Gastrocnemius medialis (tissue), 4 donors: ENCODE measurements at regions of chr5 and their contacts with region 1.

Region 1: DNA sequence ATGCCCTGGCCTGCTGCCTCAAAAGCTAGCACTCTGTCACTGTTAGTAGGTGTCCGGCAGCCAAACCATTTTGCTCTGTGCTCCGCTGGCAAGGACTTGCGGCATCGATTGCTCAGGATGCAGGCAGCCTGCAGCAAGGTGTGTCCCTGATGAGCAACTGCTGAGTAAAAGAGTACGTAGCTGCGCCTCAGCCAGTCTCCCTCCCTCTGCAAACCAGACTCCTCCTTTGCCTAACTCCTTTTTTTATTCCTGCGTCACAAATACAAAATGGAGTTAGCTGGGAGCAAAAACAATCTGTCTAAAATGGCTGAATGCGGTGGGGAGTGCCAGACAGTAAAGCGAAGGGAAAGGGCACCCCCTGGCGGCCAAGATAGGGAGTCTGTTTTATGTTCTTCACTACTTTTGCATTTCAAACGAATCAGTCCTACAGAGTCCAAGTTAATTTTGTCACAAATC is 61.1 kb downstream of the DIAPH1 start:
- DNase-seq: peak; percentile 80 to 93
- ATAC-seq: peak; percentile 72 to 79
- H3K4me3 ChIP-seq: peak overlapping the region; percentile 21 to 38 (median 30)
- H3K27ac ChIP-seq: peak overlapping the region; percentile 77 to 92 (median 88)
- H3K4me1 ChIP-seq: peaks cover 37 to 44% of the 10 kb centered on the region in 2 donors
- H3K27me3 ChIP-seq: no peaks in the 10 kb centered on the region
- CTCF ChIP-seq: peak; percentile 83 to 92 (median 91)
- POLR2A ChIP-seq: no peak

Region 2: GRCh38 chr5:141320225-141321169 is 237.2 kb before region 1 on chr5 and contains the start of gene TAF7:
- in situ Hi-C with region 1: loop called in 2 of 4 experiments (anchors 10 kb)
- intact Hi-C with region 1: loop called (anchors 2 kb)
- DNase-seq: peak; percentile 82 to 88
- ATAC-seq: peak; percentile 94 to 97
- H3K4me3 ChIP-seq: peak within 1 kb of the TSS; percentile 62 to 86 (median 84)
- H3K27ac ChIP-seq: peak within 1 kb of the TSS; percentile 85 to 97 (median 94)
- H3K4me1 ChIP-seq: peaks cover 32 to 35% of the 10 kb centered on the region in 2 donors
- H3K27me3 ChIP-seq: no peaks in the 10 kb centered on the region
- CTCF ChIP-seq: peak; percentile 79 to 95 (median 88)
- POLR2A ChIP-seq: peak; percentile 99 to 100
- total RNA-seq, gene TAF7: 60.9 to 91.2 (median 79.8) TPM

Region 3: DNA sequence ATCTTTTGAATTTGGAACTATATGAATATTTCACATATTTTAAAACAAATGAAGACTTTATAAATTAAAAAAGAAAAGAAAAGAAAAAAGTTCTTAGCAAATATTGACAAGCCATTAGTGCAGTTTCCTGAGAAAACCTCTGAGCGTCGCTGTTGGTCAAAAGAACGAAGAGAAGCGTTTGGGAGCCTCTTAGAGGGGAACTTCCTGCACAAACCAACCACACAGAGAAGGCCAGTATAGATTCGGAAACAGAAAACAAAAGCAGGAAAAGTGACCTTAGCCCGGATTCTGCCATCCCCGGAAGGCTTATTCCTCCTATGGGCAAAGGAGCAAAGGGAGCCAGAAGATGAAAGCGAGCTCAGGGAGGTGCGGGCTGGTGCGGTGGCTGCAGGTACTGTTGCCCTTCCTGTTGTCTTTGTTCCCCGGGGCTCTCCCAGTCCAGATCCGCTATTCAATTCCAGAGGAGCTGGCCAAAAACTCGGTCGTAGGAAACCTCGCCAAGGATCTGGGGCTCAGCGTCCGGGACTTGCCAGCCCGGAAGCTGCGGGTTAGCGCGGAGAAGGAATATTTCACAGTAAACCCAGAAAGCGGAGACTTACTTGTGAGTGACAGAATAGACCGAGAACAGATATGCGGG is 197.8 kb before region 1 on chr5 and contains the start of gene PCDHGB2:
- in situ Hi-C with region 1: no loop called
- intact Hi-C with region 1: loop called (anchors 1 kb)
- DNase-seq: no peak
- ATAC-seq: peak; percentile 30 to 71
- H3K4me3 ChIP-seq: peak within 1 kb of the TSS; percentile 41 to 57 (median 42)
- H3K27ac ChIP-seq: peak within 1 kb of the TSS; percentile 30 to 67 (median 52)
- H3K4me1 ChIP-seq: peaks cover 5 to 9% of the 10 kb centered on the region in 2 donors
- H3K27me3 ChIP-seq: peaks cover 0 to 39% (median 35%) of the 10 kb centered on the region in 3 donors
- CTCF ChIP-seq: peak; percentile 26 to 48 (median 34)
- POLR2A ChIP-seq: no peak
- total RNA-seq, gene PCDHGB2: 0.55 to 3.4 (median 1.9) TPM

Region 4: DNA sequence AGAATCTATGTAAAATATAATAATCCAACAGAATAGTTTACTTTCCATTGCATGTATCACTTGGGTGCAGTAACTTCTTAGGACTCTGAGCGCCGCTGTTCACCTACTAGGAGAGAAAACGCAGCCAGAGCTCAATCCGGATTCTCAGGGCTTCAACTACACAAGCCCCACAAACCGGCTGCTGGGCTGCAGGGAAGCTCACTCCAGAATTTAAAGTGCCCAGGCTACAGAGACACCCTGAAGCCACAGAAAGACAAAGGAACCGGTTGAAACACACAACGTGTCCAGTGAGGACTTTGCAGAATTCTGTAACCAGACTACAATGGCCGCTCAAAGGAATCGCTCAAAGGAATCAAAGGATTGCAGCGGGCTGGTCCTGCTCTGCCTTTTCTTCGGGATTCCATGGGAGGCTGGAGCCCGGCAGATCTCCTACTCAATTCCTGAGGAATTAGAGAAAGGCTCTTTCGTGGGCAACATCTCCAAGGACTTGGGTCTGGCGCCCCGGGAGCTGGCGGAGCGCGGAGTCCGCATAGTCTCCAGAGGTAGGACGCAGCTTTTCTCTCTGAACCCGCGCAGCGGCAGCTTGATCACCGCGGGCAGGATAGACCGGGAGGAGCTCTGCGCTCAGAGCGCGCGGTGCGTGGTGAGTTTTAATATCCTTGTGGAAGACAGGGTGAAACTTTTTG is 144.7 kb before region 1 on chr5 and contains the start of gene PCDHGA10:
- in situ Hi-C with region 1: loop called in 2 of 4 experiments (anchors 5 kb)
- intact Hi-C with region 1: no loop called
- DNase-seq: peak in 1 of 2 donors; percentile 55
- ATAC-seq: peak; percentile 63 to 64
- H3K4me3 ChIP-seq: peak within 1 kb of the TSS; percentile 35 to 50 (median 46)
- H3K27ac ChIP-seq: peak within 1 kb of the TSS; percentile 24 to 61 (median 41)
- H3K4me1 ChIP-seq: peaks cover 0 to 15% of the 10 kb centered on the region in 2 donors
- H3K27me3 ChIP-seq: no peaks in the 10 kb centered on the region
- CTCF ChIP-seq: peak; percentile 40 to 71 (median 57)
- POLR2A ChIP-seq: no peak
- total RNA-seq, gene PCDHGA10: 0.80 to 2.4 (median 1.2) TPM

Region 5: DNA sequence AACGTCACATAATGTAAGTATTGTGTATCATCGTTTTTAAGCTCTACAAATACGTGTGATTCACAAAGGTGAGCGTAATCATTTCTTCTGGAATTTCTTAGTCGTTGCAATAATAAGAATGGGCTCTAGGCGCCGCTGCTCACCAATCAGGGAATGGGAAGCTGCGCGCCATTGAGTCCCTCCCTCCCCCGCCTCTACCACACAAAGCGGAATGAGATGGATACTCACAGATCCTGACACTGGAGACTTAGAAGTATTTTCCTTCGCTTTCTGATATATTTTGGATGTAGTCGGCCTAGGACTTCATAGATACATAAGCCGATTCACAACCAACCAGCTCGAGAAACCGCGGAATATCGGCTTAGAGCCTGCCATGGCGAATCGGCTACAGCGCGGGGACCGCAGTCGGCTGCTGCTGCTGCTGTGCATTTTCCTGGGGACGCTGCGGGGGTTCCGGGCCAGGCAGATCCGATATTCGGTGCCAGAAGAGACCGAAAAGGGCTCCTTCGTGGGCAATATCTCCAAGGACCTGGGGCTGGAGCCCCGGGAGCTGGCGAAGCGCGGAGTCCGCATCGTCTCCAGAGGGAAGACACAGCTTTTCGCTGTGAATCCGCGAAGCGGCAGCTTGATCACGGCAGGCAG is 136.7 kb before region 1 on chr5 and contains the start of gene PCDHGA11:
- in situ Hi-C with region 1: loop called in 3 of 4 experiments (anchors 5 to 10 kb)
- intact Hi-C with region 1: loop called (anchors 2 kb)
- DNase-seq: peak in 1 of 2 donors; percentile 47
- ATAC-seq: peak; percentile 54 to 63
- H3K4me3 ChIP-seq: peak within 1 kb of the TSS; percentile 48 to 56 (median 53)
- H3K27ac ChIP-seq: peak within 1 kb of the TSS; percentile 23 to 55 (median 36)
- H3K4me1 ChIP-seq: peaks cover 12 to 44% of the 10 kb centered on the region in 2 donors
- H3K27me3 ChIP-seq: peaks cover 0 to 10% (median 0%) of the 10 kb centered on the region in 3 donors
- CTCF ChIP-seq: peak; percentile 49 to 71 (median 57)
- POLR2A ChIP-seq: no peak
- total RNA-seq, gene PCDHGA11: 1.2 to 3.3 (median 1.3) TPM

Region 6: GRCh38 chr5:141475625-141476131 is 82.0 kb before region 1 on chr5 and contains the start of gene PCDHGC3:
- in situ Hi-C with region 1: loop called in 1 of 4 experiments (anchors 5 kb)
- intact Hi-C with region 1: loop called (anchors 1 kb)
- DNase-seq: peak; percentile 92 to 95
- ATAC-seq: peak; percentile 95
- H3K4me3 ChIP-seq: peak within 1 kb of the TSS; percentile 69 to 83 (median 75)
- H3K27ac ChIP-seq: peak within 1 kb of the TSS; percentile 82 to 91 (median 88)
- H3K4me1 ChIP-seq: peaks cover 48 to 53% of the 10 kb centered on the region in 2 donors
- H3K27me3 ChIP-seq: no peaks in the 10 kb centered on the region
- CTCF ChIP-seq: peak in 4 of 5 experiments; percentile 36 to 63 (median 58)
- POLR2A ChIP-seq: peak; percentile 35 to 67
- total RNA-seq, gene PCDHGC3: 11.8 to 14.5 (median 13.8) TPM

Region 7: GRCh38 chr5:141729387-141730006 is 171.8 kb after region 1 on chr5:
- in situ Hi-C with region 1: no loop called
- intact Hi-C with region 1: no loop called
- DNase-seq: no peak
- ATAC-seq: no peak
- H3K4me3 ChIP-seq: no peak overlapping the region
- H3K27ac ChIP-seq: no peak overlapping the region
- H3K4me1 ChIP-seq: no peaks in the 10 kb centered on the region
- H3K27me3 ChIP-seq: no peaks in the 10 kb centered on the region
- CTCF ChIP-seq: no peak
- POLR2A ChIP-seq: no peak